Heart left ventricle (tissue), 16 donors: ENCODE measurements at regions of chr10 and their contacts with region 1.

Region 1: DNA sequence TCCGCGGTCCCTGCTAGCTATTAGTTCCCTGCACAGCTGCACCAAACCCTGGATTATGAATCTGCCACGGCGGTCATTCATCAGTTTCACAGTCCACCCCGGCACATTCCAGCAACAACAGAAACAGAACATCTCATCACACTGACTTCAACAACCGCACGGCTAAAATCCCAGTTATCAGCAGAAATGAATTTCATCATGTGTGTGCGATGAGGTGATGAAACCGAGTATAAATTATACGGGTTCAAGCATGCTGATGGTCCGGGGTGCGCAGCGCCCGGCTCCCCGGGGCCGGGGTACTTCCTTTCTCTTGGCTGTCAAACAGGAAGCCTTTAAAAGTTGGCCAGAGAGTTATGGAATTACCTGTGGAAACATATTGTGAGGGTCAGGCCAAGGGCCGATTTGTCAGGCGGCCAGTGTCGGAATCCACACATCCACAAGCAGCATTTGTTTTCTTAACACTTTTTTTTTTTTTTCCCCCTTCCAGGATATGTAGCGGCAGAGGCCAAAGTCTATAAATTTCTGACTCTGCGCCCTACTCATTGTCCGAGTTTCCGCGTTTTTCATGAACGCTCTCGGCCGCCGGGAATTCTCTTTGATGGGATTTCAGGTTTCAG is 420.9 kb upstream of the MGMT start:
- DNase-seq: peak in 2 of 5 donors; percentile 29 to 40
- ATAC-seq: peak in 3 of 4 donors; percentile 34 to 63 (median 36)
- H3K4me3 ChIP-seq: peak overlapping the region in 9 of 12 donors; percentile 8 to 46 (median 31)
- H3K27ac ChIP-seq: peak overlapping the region in 5 of 12 donors; percentile 17 to 57 (median 34)
- H3K4me1 ChIP-seq: peaks cover 0 to 15% (median 0%) of the 10 kb centered on the region in 12 donors
- H3K27me3 ChIP-seq: peaks cover 0 to 4% (median 0%) of the 10 kb centered on the region in 9 donors
- CTCF ChIP-seq: no peak
- POLR2A ChIP-seq: no peak

Region 2: GRCh38 chr10:129258283-129258923 is 212.2 kb after region 1 on chr10:
- intact Hi-C with region 1: loop called in 2 of 10 experiments (anchors 5 to 10 kb)
- DNase-seq: no peak
- ATAC-seq: peak in 2 of 4 donors; percentile 38 to 86
- H3K4me3 ChIP-seq: no peak overlapping the region
- H3K27ac ChIP-seq: peak overlapping the region in 9 of 12 donors; percentile 13 to 56 (median 28)
- H3K4me1 ChIP-seq: peaks cover 0 to 14% (median 5%) of the 10 kb centered on the region in 12 donors
- H3K27me3 ChIP-seq: no peaks in the 10 kb centered on the region
- CTCF ChIP-seq: no peak
- POLR2A ChIP-seq: no peak

Region 3: DNA sequence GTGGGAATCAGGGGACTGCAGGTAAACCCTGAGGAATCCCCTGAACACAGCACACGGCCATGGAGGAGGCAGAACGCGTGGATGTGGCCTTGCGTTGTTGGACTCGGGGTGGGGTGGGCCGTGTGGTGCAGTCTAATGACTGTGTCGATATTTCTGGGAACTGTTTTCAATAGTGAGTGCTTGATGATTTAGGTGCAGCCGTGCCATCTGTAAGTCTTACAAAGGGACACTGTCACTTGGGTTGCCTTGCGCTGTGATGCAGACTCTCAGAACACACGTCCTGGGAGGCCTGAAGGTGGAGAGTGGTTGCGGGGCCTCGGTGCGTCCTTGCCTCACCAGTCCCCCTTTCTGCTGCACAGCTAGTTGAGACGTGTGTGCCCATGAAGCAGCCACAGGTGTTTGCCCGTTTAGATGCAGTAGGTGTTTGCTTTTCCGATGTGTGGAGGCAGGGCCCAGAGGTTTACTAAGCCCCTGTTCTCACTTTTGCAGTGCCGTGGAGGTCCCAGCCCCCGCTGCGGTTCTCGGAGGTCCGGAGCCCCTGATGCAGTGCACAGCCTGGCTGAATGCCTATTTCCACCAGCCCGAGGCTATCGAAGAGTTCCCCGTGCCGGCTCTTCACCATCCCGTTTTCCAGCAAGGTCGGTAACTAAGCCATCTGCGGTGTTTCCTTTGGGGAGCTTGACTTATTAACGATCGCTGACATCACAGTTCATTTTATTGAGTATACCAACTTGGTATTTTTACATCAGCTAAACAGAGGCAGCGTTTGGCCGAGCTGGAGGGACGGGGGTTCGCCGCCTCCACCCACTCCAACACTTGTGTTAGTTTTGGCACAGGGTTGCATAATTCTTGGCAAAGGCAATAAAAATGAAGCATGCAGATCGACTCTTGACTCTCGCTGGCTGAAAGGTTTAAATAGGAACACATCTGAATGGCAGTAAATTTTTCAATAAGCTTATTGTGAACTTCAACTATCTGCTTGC is 661.5 kb after region 1 on chr10:
- intact Hi-C with region 1: loop called in 1 of 10 experiments (anchors 10 kb)
- DNase-seq: peak in 3 of 5 donors; percentile 37 to 59 (median 48)
- ATAC-seq: peak in 2 of 4 donors; percentile 32 to 65
- H3K4me3 ChIP-seq: peak overlapping the region in 1 of 12 donors; percentile 14
- H3K27ac ChIP-seq: no peak overlapping the region
- H3K4me1 ChIP-seq: peaks cover 0 to 18% (median 7%) of the 10 kb centered on the region in 12 donors
- H3K27me3 ChIP-seq: no peaks in the 10 kb centered on the region
- CTCF ChIP-seq: no peak
- POLR2A ChIP-seq: no peak